ENCODE measurements at regions of chr3 and their contacts with region 1.

Region 1: DNA sequence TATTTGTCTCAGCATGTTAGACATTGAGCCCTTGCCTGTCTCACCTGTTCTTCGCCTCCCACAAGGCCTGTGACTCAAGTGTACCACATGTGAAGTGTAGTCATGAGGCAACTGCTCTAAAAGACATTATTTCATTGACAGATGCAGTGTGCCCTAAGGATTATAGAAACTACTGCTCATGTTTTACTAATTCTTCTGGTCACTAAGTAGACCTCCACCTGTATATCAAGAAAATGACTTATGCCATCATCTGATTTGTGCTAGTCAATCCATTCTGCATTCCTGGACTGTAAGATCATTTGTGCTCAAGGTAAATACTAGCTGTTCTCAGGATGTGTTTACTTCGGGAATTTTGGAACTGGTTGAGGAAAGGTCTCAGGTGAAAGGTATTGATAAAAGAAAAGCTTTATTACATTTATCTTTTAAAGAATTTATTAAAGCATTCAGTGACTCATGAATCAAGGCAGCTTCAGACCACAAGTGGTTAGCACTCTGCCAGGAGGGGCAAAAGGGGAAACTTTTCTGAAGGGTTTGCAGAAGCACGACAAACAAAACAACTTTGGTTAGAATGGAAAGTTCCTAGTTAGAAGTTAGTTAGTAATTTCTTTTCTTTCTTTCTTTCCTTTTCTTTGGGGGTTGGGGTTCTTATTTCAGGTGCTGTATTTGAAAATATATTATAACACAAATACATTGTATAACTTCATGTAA is 465.3 kb upstream of the CBLB start:
- DNase-seq: no peak
- H3K4me3 Mint-ChIP-seq: peak overlapping the region; percentile 63
- H3K27ac Mint-ChIP-seq: peak overlapping the region; percentile 91
- H3K4me1 Mint-ChIP-seq: peaks cover 76% of the 10 kb centered on the region
- H3K27me3 Mint-ChIP-seq: no peaks in the 10 kb centered on the region

Region 2: DNA sequence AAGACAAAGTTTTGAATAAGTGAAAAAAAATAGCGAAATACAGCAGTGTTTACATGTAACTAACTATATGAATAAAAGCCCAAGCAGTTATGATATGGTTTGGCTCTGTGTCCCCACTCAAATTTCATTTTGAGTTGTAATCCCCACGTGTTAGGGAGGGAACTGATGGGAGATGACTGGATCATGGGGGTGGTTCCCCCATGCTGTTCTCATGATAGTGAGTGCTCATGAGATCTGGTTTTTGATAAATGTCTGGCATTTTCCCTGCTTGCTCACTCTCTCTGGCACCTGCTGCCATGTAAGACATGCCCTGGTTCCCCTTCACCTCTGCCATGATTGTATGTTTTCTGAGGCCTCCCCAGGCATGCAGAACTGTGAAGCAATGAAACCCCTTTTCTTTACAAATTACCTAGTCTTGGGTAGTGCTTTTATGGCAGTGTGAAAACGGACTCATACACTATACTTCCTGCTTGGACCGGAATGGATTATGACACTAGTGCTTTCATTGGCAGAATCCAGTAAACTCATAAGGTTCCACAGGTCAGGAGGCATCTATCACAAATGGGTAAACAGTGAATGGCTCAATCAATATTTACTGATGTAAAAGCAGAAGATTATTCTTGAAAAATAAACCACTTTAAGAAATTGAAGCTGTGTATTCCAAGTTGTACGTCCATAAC is 657.3 kb before region 1 on chr3:
- intact Hi-C with region 1: loop called (anchors 1 kb)
- DNase-seq: no peak
- H3K4me3 Mint-ChIP-seq: no peak overlapping the region
- H3K27ac Mint-ChIP-seq: peak overlapping the region; percentile 74
- H3K4me1 Mint-ChIP-seq: peaks cover 23% of the 10 kb centered on the region
- H3K27me3 Mint-ChIP-seq: no peaks in the 10 kb centered on the region

Region 3: GRCh38 chr3:106013971-106014370 is 320.1 kb before region 1 on chr3:
- intact Hi-C with region 1: loop called (anchors 1 kb)
- DNase-seq: no peak
- H3K4me3 Mint-ChIP-seq: no peak overlapping the region
- H3K27ac Mint-ChIP-seq: peak overlapping the region; percentile 5
- H3K4me1 Mint-ChIP-seq: peaks cover 45% of the 10 kb centered on the region
- H3K27me3 Mint-ChIP-seq: no peaks in the 10 kb centered on the region

Region 4: GRCh38 chr3:106206146-106206545 is 127.9 kb before region 1 on chr3:
- intact Hi-C with region 1: loop called (anchors 2 kb)
- DNase-seq: no peak
- H3K4me3 Mint-ChIP-seq: peak overlapping the region; percentile 43
- H3K27ac Mint-ChIP-seq: peak overlapping the region; percentile 86
- H3K4me1 Mint-ChIP-seq: peaks cover 46% of the 10 kb centered on the region
- H3K27me3 Mint-ChIP-seq: no peaks in the 10 kb centered on the region

Region 5: GRCh38 chr3:106239195-106239697 is 94.8 kb before region 1 on chr3:
- intact Hi-C with region 1: no loop called
- DNase-seq: no peak
- H3K4me3 Mint-ChIP-seq: no peak overlapping the region
- H3K27ac Mint-ChIP-seq: no peak overlapping the region
- H3K4me1 Mint-ChIP-seq: peaks cover 8% of the 10 kb centered on the region
- H3K27me3 Mint-ChIP-seq: no peaks in the 10 kb centered on the region

Region 6: DNA sequence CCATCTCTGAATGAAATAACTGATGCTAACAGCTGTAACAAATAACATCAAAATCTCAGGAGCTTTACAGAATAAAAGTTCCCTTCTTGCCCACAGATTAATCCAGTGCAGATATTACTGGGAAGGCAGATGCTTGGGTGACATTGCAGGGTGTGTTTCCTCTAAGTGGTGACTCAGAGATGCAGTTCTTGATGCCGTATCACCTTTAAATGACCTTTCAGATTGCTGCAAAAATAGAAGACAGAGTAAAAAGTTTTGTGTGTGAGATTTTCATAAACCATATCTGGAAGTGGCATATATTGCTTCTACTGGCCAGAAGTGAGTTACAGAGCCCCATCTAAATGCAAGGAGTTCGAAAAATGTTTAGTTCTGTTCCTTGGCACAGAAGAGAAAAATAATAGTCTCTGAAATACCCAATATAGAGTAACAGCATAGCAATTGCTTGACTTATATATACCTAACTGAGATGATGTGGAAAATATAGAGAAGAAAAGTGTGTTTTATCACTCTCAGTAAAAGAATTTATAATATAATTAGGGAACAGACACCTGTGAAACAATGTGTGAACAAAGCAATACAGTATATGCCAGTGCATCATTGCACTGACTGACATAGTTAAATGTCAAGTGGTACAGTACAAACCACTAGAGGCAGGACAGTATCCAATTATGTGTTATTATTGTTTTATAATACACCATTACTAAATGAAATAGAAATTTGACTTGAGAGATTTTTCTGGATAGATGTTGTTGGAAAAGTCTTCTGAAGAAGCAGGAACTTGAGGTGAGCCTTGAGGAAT is 34.6 kb before region 1 on chr3:
- intact Hi-C with region 1: loop called (anchors 1 kb)
- DNase-seq: peak; percentile 13
- H3K4me3 Mint-ChIP-seq: no peak overlapping the region
- H3K27ac Mint-ChIP-seq: peak overlapping the region; percentile 66
- H3K4me1 Mint-ChIP-seq: peaks cover 50% of the 10 kb centered on the region
- H3K27me3 Mint-ChIP-seq: no peaks in the 10 kb centered on the region

Region 7: DNA sequence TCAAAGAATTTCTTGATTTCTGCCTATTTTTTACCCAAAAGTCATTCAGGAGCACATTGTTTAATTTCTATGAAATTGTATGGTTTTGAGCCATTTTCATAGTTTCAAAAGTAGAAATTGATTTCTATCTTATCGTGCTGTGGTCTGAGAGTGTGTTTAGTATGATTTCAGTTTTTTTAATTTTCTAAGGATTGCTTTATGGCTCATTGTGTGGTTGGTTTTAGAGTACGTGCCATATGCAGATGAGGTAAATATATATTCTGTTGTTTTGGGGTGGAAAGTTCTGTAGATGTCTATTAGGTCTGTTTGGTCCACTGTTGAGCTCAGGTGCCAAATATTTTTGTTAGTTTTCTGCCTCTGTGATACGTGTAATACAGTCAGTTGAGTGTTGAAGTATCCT is 21.8 kb after region 1 on chr3:
- intact Hi-C with region 1: no loop called
- DNase-seq: no peak
- H3K4me3 Mint-ChIP-seq: no peak overlapping the region
- H3K27ac Mint-ChIP-seq: peak overlapping the region; percentile 29
- H3K4me1 Mint-ChIP-seq: peaks cover 19% of the 10 kb centered on the region
- H3K27me3 Mint-ChIP-seq: no peaks in the 10 kb centered on the region

Region 8: DNA sequence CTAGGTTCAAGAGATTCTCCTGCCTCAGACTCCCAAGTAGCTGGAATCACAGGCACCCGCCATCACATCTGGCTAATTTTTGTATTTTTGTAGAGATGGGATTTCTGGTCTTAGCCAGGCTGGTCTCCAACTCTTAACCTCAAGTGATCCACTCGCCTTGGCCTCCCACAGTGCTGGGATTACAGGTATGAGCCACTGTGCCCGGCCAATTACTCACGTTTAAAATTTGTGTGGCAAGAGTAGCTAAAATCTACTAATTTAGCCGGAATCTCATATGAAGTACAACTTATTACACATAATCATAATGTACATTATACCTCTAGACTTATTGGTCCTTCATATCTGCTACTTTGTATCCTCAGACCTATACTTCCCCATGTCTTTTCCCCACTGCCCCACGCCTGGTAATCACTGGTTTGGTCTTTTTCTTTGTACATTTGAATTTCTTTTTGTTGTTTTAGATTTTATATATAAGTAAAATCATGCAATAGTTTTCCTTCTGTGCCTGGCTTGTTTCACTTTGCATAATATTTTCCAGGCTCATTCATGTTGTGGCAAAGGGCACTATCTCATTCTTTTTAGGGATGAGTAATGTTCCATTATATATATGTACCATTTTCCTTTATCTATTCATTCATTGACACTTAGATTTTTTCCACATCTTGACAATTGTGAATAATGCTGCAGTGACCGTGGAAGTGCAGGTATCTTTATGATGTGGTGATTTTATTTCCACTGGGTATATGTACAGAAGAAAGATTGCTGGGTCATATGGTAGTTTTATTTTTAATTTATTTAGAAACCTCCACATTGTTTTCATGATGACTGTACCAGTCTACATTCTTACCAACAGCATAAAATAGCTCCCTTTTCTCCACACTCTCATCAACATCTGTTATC is 139.8 kb after region 1 on chr3:
- intact Hi-C with region 1: loop called (anchors 1 kb)
- DNase-seq: no peak
- H3K4me3 Mint-ChIP-seq: no peak overlapping the region
- H3K27ac Mint-ChIP-seq: peak overlapping the region; percentile 84
- H3K4me1 Mint-ChIP-seq: peaks cover 7% of the 10 kb centered on the region
- H3K27me3 Mint-ChIP-seq: no peaks in the 10 kb centered on the region

Measured in activated T-helper 2 cell treated with anti-CD3 and anti-CD28 coated beads, Interferon-gamma antibody, Interleukin-2, Interleukin-4, amounts not matched to agents 10 μg/mL and 5 μg/mL and 100 μg/mL, durations not matched to agents 14 hours and 24 hours and 36 hours (primary cell).